ENCODE measurements at regions of chr22 and their contacts with region 1.

Region 1: GRCh38 chr22:37199103-37199759 is 11.2 kb upstream of the C1QTNF6 start:
- DNase-seq: peak; percentile 99
- ATAC-seq: peak; percentile 99
- H3K4me3 Mint-ChIP-seq: peak overlapping the region; percentile 70
- H3K27ac Mint-ChIP-seq: no peak overlapping the region
- H3K4me1 Mint-ChIP-seq: peaks cover 33% of the 10 kb centered on the region
- H3K27me3 Mint-ChIP-seq: 0 out of 2 replicates have a peak, but pooled peaks cover 3% of the 10 kb centered on the region
- CTCF ChIP-seq: peak; percentile 67

Region 2: GRCh38 chr22:37043828-37044538 is 155.2 kb before region 1 on chr22:
- CTCF ChIA-PET with region 1: interaction called, 21 read pairs
- POLR2A ChIA-PET with region 1: no interaction called
- DNase-seq: peak; percentile 50
- ATAC-seq: peak; percentile 77
- H3K4me3 Mint-ChIP-seq: no peak overlapping the region
- H3K27ac Mint-ChIP-seq: no peak overlapping the region
- H3K4me1 Mint-ChIP-seq: peaks cover 10% of the 10 kb centered on the region
- H3K27me3 Mint-ChIP-seq: peaks cover 11% of the 10 kb centered on the region
- CTCF ChIP-seq: no peak

Region 3: DNA sequence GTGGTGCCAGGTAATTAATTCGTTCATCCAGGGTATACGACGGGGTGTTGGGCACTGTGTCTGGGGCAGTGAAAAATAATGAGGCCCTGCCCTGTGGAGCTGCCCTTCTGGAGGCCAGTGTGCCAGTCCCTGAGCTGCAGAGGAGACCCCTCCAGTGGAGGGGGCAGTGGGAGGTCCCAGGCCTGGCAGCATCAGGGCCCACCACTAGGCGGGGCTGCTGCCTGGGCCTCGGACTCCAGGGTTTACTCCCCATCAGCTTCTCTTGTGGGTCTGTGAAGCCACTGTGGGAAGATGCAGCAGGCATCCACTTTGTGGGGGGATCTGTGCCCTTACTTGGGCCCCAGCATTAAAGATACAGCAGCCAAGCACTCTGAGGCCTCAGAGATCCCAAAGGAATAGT is 72.3 kb before region 1 on chr22:
- CTCF ChIA-PET with region 1: interaction called, 45 read pairs
- POLR2A ChIA-PET with region 1: no interaction called
- DNase-seq: peak; percentile 47
- ATAC-seq: peak; percentile 47
- H3K4me3 Mint-ChIP-seq: no peak overlapping the region
- H3K27ac Mint-ChIP-seq: no peak overlapping the region
- H3K4me1 Mint-ChIP-seq: peaks cover 29% of the 10 kb centered on the region
- H3K27me3 Mint-ChIP-seq: no peaks in the 10 kb centered on the region; the same call in 1 of the 2 replicates
- CTCF ChIP-seq: peak; percentile 59; the same call in 1 of the 2 replicates

Region 4: DNA sequence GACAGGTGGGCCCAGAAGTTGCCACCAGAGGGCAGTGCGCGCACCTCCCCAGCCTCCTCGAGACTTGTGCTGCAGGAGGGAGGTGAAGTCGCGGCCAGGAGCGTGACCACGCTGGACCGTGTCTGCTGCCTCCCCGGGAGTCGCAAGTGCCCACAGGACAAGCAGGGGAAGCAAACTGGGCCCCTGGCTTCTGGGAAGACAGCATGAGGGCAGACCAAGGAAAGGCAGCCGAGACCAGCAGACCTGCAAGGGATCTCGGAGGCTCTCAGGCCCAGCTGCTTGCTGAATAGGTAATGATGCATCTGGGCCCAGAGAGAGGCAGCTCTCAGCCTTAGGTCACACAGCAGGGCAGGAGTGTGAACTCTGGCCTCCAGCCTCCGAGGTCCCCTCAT is 32.6 kb before region 1 on chr22:
- CTCF ChIA-PET with region 1: interaction called, 49 read pairs
- POLR2A ChIA-PET with region 1: no interaction called
- DNase-seq: peak; percentile 84
- ATAC-seq: peak; percentile 88
- H3K4me3 Mint-ChIP-seq: no peak overlapping the region; the same call in 1 of the 2 replicates
- H3K27ac Mint-ChIP-seq: no peak overlapping the region
- H3K4me1 Mint-ChIP-seq: peaks cover 16% of the 10 kb centered on the region
- H3K27me3 Mint-ChIP-seq: peaks cover 7% of the 10 kb centered on the region
- CTCF ChIP-seq: no peak; the same call in 1 of the 2 replicates

Region 5: GRCh38 chr22:37186228-37186996 is 12.8 kb before region 1 on chr22:
- CTCF ChIA-PET with region 1: interaction called, 23 read pairs
- POLR2A ChIA-PET with region 1: interaction called, 4 read pairs
- DNase-seq: no peak
- ATAC-seq: peak; percentile 60
- H3K4me3 Mint-ChIP-seq: peak overlapping the region; percentile 56
- H3K27ac Mint-ChIP-seq: peak overlapping the region; percentile 82; the same call in 1 of the 2 replicates
- H3K4me1 Mint-ChIP-seq: peaks cover 49% of the 10 kb centered on the region
- H3K27me3 Mint-ChIP-seq: no peaks in the 10 kb centered on the region
- CTCF ChIP-seq: no peak

Region 6: GRCh38 chr22:37218399-37218770 is 19.2 kb after region 1 on chr22:
- CTCF ChIA-PET with region 1: interaction called, 21 read pairs
- POLR2A ChIA-PET with region 1: no interaction called
- DNase-seq: no peak
- ATAC-seq: no peak
- H3K4me3 Mint-ChIP-seq: no peak overlapping the region
- H3K27ac Mint-ChIP-seq: no peak overlapping the region
- H3K4me1 Mint-ChIP-seq: peaks cover 5% of the 10 kb centered on the region
- H3K27me3 Mint-ChIP-seq: peaks cover 17% of the 10 kb centered on the region
- CTCF ChIP-seq: no peak

Region 7: DNA sequence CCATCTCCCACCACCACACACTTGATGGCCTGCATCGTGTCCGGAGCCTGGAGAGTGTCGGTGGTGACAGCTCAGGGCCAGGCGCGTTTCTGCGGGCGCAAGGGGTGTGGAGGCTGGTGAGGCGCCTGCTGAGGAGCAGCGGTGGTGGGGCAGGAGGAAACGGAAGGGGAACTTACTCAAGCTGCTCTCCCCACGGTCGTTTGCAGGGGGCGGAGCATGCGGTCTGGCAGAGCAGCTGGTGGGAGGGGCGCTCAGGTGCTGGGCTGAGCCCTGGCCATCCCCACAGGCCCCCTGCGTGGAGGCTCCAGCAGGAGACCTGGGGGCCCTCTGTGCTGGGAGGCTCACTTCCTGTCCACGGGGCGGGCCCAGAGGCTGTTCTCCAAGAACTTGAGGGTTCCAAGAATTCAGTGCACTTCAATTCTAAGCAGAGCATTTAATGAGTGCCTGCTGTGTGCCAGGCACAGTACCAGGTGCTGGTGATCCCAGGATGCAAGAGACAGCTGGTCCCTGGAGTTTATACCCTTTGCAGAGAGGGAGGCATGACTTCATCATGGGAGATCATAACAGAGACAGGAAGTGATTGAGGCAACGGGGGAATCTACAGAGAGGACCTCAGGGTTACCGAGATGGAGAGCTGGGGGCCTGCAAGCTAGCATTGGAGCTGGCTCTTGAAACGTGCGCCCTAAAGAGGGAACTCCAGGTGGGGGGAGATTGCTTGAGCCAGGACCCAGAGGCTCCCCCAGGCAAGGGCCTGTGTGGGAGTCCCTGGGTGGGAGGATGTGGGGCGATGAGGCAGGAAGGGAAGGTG is 45.1 kb after region 1 on chr22 and contains the start of gene RAC2:
- CTCF ChIA-PET with region 1: interaction called, 40 read pairs
- POLR2A ChIA-PET with region 1: no interaction called
- DNase-seq: peak; percentile 57
- ATAC-seq: peak; percentile 71
- H3K4me3 Mint-ChIP-seq: peak within 1 kb of the TSS; percentile 25; the same call in 1 of the 2 replicates
- H3K27ac Mint-ChIP-seq: no peak within 1 kb of the TSS
- H3K4me1 Mint-ChIP-seq: peaks cover 20% of the 10 kb centered on the region
- H3K27me3 Mint-ChIP-seq: no peaks in the 10 kb centered on the region
- CTCF ChIP-seq: no peak
- total RNA-seq, gene RAC2: 3.6 to 4.9 TPM (median 4.9 TPM) in 3 replicates

Region 8: GRCh38 chr22:37345863-37346504 is 146.8 kb after region 1 on chr22:
- CTCF ChIA-PET with region 1: no interaction called
- POLR2A ChIA-PET with region 1: no interaction called
- DNase-seq: no peak
- ATAC-seq: no peak
- H3K4me3 Mint-ChIP-seq: no peak overlapping the region
- H3K27ac Mint-ChIP-seq: no peak overlapping the region; the same call in none of the 2 replicates
- H3K4me1 Mint-ChIP-seq: peaks cover 19% of the 10 kb centered on the region
- H3K27me3 Mint-ChIP-seq: peaks cover 6% of the 10 kb centered on the region
- CTCF ChIP-seq: no peak